ENCODE measurements at regions of chr11 and their contacts with region 1.

Region 1: GRCh38 chr11:63945477-63946163 is 6.8 kb downstream of the NAA40 start:
- DNase-seq: peak; percentile 75 to 79 (median 77)
- H3K4me3 ChIP-seq: no peak overlapping the region
- H3K27ac ChIP-seq: no peak overlapping the region
- H3K4me1 ChIP-seq: peaks cover 4% of the 10 kb centered on the region
- H3K27me3 ChIP-seq: no peaks in the 10 kb centered on the region
- CTCF ChIP-seq: peak; percentile 55 to 87 (median 81)
- EP300 ChIP-seq: no peak
- POLR2A ChIP-seq: no peak

Region 2: GRCh38 chr11:63490551-63491239 is 454.9 kb before region 1 on chr11 and contains the start of gene PLAAT5:
- intact Hi-C with region 1: loop called in 1 of 4 experiments (anchors 10 kb)
- DNase-seq: peak; percentile 60 to 81 (median 75)
- H3K4me3 ChIP-seq: peak within 1 kb of the TSS; percentile 42
- H3K27ac ChIP-seq: peak within 1 kb of the TSS; percentile 17 to 77
- H3K4me1 ChIP-seq: peaks cover 3% of the 10 kb centered on the region
- H3K27me3 ChIP-seq: no peaks in the 10 kb centered on the region
- CTCF ChIP-seq: no peak
- EP300 ChIP-seq: no peak
- POLR2A ChIP-seq: no peak
- total RNA-seq, gene PLAAT5: 1.7 to 22.2 (median 3.8) TPM

Region 3: DNA sequence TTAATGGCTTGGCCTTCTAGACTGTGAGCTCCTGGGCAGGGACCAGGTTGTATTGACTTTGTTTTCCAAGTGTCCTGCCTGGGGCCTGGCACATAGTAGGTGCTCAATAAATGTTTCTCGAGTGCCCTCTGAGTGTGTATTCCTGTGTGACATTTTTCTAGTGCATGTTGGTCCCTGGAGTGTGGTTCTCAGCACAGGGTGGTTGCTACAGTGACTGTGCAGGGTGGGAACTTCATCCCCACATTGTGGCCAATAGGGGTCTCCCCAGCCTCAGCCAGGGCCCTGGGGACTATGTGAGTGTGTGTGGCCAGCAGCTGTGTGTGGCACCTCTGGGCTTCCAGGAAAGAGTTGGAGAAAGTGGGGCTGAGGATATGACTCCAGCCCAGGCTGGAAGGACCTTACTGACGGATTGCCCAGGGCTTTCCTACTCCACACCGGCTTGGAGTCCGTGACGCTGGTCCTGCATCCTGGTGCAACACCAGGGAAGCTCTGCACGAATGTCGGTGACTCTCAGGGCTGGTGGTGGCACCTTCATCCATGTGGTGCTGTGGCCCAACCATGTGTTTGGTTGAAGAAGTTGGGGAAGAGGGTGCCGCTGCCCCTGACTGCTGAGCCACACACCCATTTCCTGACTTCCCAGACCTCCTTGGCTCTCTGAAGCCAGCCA is 115.7 kb before region 1 on chr11:
- intact Hi-C with region 1: loop called in 1 of 4 experiments (anchors 2 kb)
- DNase-seq: no peak
- H3K4me3 ChIP-seq: no peak overlapping the region
- H3K27ac ChIP-seq: no peak overlapping the region
- H3K4me1 ChIP-seq: no peaks in the 10 kb centered on the region
- H3K27me3 ChIP-seq: no peaks in the 10 kb centered on the region
- CTCF ChIP-seq: no peak
- EP300 ChIP-seq: no peak
- POLR2A ChIP-seq: no peak

Region 4: DNA sequence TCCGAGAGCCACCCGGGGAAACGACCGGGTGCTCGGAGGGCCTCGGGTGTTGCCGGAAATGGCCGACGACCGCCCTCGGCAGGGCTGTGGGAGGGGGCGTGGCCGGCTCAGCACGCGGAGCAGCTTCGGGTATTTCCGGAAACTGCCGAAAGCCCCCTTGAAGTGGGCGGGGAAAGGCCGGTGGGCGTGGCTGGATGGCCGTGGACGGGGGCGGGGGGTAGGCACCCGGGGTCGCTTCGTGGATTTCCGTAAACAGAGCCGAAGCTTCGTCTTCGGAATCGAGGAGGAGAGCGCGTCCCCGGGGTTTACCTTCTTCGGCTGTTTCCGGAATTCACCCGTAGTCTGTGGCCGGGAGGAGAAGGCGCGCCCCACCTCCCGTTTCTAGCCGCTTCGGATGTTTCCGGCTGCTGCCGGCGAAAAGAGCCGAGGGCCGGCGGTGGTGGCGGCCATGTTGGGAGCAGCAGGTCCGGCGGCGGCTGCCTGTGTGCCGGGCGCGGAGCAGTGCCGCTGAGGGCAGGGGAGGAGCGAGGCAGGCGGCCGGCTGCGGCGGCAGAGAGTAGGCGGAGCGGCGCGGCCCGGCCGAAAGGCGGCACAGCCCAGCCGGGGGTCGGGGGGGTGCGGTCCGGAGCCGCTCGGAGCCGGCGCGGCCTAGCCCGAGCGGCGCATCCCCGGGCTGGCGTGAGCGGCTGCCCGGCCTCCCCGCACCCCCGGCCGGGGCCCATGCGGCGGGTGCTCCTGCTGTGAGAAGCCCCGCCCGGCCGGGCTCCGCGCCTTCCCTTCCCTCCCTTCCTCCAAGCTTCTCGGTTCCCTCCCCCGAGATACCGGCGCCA is 106.7 kb before region 1 on chr11 and contains the start of gene MARK2:
- intact Hi-C with region 1: loop called (anchors 1 to 2 kb)
- DNase-seq: peak; percentile 99 to 100 (median 100)
- H3K4me3 ChIP-seq: peak within 1 kb of the TSS; percentile 80
- H3K27ac ChIP-seq: peak within 1 kb of the TSS; percentile 84 to 93
- H3K4me1 ChIP-seq: peaks cover 11% of the 10 kb centered on the region
- H3K27me3 ChIP-seq: no peaks in the 10 kb centered on the region
- CTCF ChIP-seq: peak in 1 of 3 donors; percentile 17
- EP300 ChIP-seq: no peak
- POLR2A ChIP-seq: peak; percentile 73
- total RNA-seq, gene MARK2: 13.5 to 27.8 (median 25.8) TPM